ENCODE measurements at regions of chr14 and their contacts with region 1.

Region 1: GRCh38 chr14:58199726-58200479 is at the start of gene ACTR10:
- DNase-seq: peak; percentile 76 to 92 (median 84)
- ATAC-seq: peak; percentile 86
- H3K4me3 ChIP-seq: peak within 1 kb of the TSS; percentile 98
- H3K4me3 Mint-ChIP-seq: peak within 1 kb of the TSS; percentile 94
- H3K27ac ChIP-seq: peak within 1 kb of the TSS; percentile 85 to 89
- H3K27ac Mint-ChIP-seq: peak within 1 kb of the TSS; percentile 95
- H3K4me1 ChIP-seq: peaks cover 15% of the 10 kb centered on the region
- H3K4me1 Mint-ChIP-seq: peaks cover 40% of the 10 kb centered on the region
- H3K27me3 ChIP-seq: no peaks in the 10 kb centered on the region
- H3K27me3 Mint-ChIP-seq: no peaks in the 10 kb centered on the region
- CTCF ChIP-seq: no peak
- total RNA-seq, gene ACTR10: 38.8 to 43.6 TPM

Region 2: GRCh38 chr14:56617084-56617483 is 1582.8 kb before region 1 on chr14:
- CTCF ChIA-PET with region 1: no interaction called
- POLR2A ChIA-PET with region 1: no interaction called
- intact Hi-C with region 1: no loop called
- DNase-seq: no peak
- ATAC-seq: no peak
- H3K4me3 ChIP-seq: no peak overlapping the region
- H3K4me3 Mint-ChIP-seq: no peak overlapping the region
- H3K27ac ChIP-seq: no peak overlapping the region
- H3K27ac Mint-ChIP-seq: no peak overlapping the region
- H3K4me1 ChIP-seq: no peaks in the 10 kb centered on the region
- H3K4me1 Mint-ChIP-seq: no peaks in the 10 kb centered on the region
- H3K27me3 ChIP-seq: no peaks in the 10 kb centered on the region
- H3K27me3 Mint-ChIP-seq: no peaks in the 10 kb centered on the region
- CTCF ChIP-seq: no peak

Region 3: DNA sequence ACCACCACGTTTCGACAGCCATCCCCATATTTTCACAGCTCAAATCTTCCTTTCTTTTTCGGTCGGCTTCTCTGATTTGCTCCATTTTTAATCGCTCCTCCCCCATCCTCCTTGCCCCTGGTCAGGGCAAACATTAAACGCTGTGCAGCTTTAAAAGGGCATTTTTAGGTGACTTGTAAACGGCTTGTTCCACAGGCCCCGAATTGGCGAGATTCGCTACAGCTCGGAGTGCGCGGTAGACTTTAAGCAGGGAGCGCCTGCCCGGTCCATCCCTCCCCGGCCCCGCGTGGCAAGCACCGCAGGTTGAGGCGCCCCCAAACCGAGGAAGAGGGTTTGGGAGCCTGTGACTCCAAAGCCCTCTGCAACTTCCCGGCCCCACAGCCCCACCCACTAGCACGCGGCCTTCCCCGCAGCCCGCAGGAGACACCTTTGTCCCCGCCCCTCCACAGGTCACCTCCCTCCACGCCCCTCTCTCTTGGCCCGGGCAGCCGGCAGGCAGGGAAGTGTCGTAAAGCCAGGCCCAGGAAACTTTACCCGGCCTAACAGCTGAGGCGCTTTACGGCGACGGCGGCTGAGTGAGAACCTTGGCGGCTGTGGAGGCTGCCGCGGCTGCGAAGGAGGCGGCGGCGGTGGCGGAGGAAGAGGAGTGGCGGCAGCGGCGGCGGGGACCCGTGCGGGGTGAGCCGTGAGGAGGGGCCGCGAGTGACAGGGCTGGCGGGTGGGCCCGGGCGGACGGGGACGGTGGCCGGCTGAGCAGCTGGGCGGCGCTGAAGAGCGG is 809.7 kb before region 1 on chr14 and contains the start of gene NAA30:
- CTCF ChIA-PET with region 1: no interaction called
- POLR2A ChIA-PET with region 1: interaction called, 5 read pairs
- intact Hi-C with region 1: loop called in 1 of 2 experiments (anchors 5 kb)
- DNase-seq: peak; percentile 80 to 98 (median 90)
- ATAC-seq: peak; percentile 91
- H3K4me3 ChIP-seq: peak within 1 kb of the TSS; percentile 91
- H3K4me3 Mint-ChIP-seq: peak within 1 kb of the TSS; percentile 94
- H3K27ac ChIP-seq: peak within 1 kb of the TSS; percentile 75 to 89
- H3K27ac Mint-ChIP-seq: peak within 1 kb of the TSS; percentile 93
- H3K4me1 ChIP-seq: peaks cover 19% of the 10 kb centered on the region
- H3K4me1 Mint-ChIP-seq: peaks cover 53% of the 10 kb centered on the region
- H3K27me3 ChIP-seq: no peaks in the 10 kb centered on the region
- H3K27me3 Mint-ChIP-seq: no peaks in the 10 kb centered on the region
- CTCF ChIP-seq: no peak
- total RNA-seq, gene NAA30: 25.8 to 27.7 TPM

Region 4: GRCh38 chr14:58239244-58240195 is 39.6 kb after region 1 on chr14:
- CTCF ChIA-PET with region 1: no interaction called
- POLR2A ChIA-PET with region 1: interaction called, 18 read pairs
- intact Hi-C with region 1: loop called (anchors 2 kb)
- DNase-seq: peak; percentile 70 to 91 (median 81)
- ATAC-seq: peak; percentile 22
- H3K4me3 ChIP-seq: peak overlapping the region; percentile 83
- H3K4me3 Mint-ChIP-seq: no peak overlapping the region
- H3K27ac ChIP-seq: peak overlapping the region; percentile 38 to 45
- H3K27ac Mint-ChIP-seq: no peak overlapping the region
- H3K4me1 ChIP-seq: peaks cover 8% of the 10 kb centered on the region
- H3K4me1 Mint-ChIP-seq: peaks cover 19% of the 10 kb centered on the region
- H3K27me3 ChIP-seq: no peaks in the 10 kb centered on the region
- H3K27me3 Mint-ChIP-seq: no peaks in the 10 kb centered on the region
- CTCF ChIP-seq: no peak

Region 5: GRCh38 chr14:58244556-58245387 is 44.9 kb after region 1 on chr14 and contains the start of gene PSMA3:
- CTCF ChIA-PET with region 1: no interaction called
- POLR2A ChIA-PET with region 1: interaction called, 18 read pairs
- intact Hi-C with region 1: loop called (anchors 2 kb)
- DNase-seq: peak; percentile 96 to 99 (median 97)
- ATAC-seq: peak; percentile 89
- H3K4me3 ChIP-seq: peak within 1 kb of the TSS; percentile 72
- H3K4me3 Mint-ChIP-seq: peak within 1 kb of the TSS; percentile 99
- H3K27ac ChIP-seq: peak within 1 kb of the TSS; percentile 93 to 96
- H3K27ac Mint-ChIP-seq: peak within 1 kb of the TSS; percentile 99
- H3K4me1 ChIP-seq: peaks cover 12% of the 10 kb centered on the region
- H3K4me1 Mint-ChIP-seq: peaks cover 52% of the 10 kb centered on the region
- H3K27me3 ChIP-seq: no peaks in the 10 kb centered on the region
- H3K27me3 Mint-ChIP-seq: no peaks in the 10 kb centered on the region
- CTCF ChIP-seq: no peak
- total RNA-seq, gene PSMA3: 104 to 108 TPM

Region 6: GRCh38 chr14:58395812-58396788 is 196.2 kb after region 1 on chr14 and contains the start of gene TOMM20L:
- CTCF ChIA-PET with region 1: interaction called, 3 read pairs
- POLR2A ChIA-PET with region 1: interaction called, 14 read pairs
- intact Hi-C with region 1: no loop called
- DNase-seq: peak; percentile 48 to 88 (median 66)
- ATAC-seq: peak; percentile 77
- H3K4me3 ChIP-seq: peak within 1 kb of the TSS; percentile 71
- H3K4me3 Mint-ChIP-seq: peak within 1 kb of the TSS; percentile 88
- H3K27ac ChIP-seq: peak within 1 kb of the TSS; percentile 69 to 75
- H3K27ac Mint-ChIP-seq: peak within 1 kb of the TSS; percentile 85
- H3K4me1 ChIP-seq: peaks cover 13% of the 10 kb centered on the region
- H3K4me1 Mint-ChIP-seq: peaks cover 12% of the 10 kb centered on the region
- H3K27me3 ChIP-seq: no peaks in the 10 kb centered on the region
- H3K27me3 Mint-ChIP-seq: no peaks in the 10 kb centered on the region
- CTCF ChIP-seq: peak; percentile 80
- total RNA-seq, gene TOMM20L: 0.56 TPM in 1 of 2 experiments, not detected in the other

Region 7: DNA sequence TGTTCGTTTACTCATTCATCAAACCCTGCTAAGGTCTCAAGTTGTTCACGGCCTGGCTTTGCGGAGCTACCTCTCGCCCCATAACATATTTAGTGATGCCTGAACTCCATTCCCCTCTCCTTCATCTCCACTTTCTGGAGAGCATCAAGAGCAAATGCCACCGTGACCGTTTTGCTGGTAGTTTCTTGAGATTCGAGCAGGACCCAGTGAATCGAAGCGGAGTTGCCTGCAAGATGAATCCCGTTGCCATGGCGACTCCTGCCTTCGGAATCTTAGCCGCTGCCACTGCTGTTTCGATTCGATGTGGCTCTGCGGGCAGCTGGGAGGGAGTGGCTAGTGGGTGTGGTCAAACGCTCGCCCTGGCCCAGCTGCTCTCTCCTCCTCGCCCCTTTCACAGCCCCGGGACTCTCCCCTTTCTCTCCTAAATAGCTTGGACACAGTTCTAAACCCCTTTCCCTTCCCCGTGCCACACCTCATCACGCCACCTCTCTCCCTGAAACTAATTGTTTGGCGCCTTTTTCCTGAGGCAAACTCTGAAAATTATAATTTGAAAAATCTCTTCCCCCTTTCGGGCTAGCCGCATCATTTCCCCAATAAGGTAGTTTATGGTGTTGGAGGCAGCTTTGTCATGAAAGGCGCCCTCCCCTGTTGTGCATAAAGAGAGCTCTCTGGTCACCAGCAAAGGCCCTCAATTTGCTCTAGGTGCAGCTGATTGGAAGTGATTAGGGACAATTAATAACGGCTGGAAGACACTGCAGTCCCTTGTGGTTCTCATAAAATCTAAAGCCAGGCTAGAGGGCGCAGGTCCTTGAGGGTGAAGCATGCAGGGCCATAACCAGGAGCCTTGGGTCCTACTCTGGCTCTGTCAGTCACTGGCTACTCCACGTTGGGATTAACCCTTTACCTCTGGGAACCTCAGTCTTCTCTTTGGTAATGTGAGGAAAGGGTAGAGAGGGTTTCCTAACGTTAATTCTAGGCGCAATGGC is 990.2 kb after region 1 on chr14:
- CTCF ChIA-PET with region 1: no interaction called
- POLR2A ChIA-PET with region 1: no interaction called
- intact Hi-C with region 1: loop called in 1 of 2 experiments (anchors 5 kb)
- DNase-seq: peak; percentile 28 to 91 (median 56)
- ATAC-seq: no peak
- H3K4me3 ChIP-seq: peak overlapping the region; percentile 83
- H3K4me3 Mint-ChIP-seq: peak overlapping the region; percentile 99
- H3K27ac ChIP-seq: peak overlapping the region; percentile 84 to 87
- H3K27ac Mint-ChIP-seq: peak overlapping the region; percentile 94
- H3K4me1 ChIP-seq: peaks cover 20% of the 10 kb centered on the region
- H3K4me1 Mint-ChIP-seq: peaks cover 29% of the 10 kb centered on the region
- H3K27me3 ChIP-seq: no peaks in the 10 kb centered on the region
- H3K27me3 Mint-ChIP-seq: no peaks in the 10 kb centered on the region
- CTCF ChIP-seq: no peak